Right ventricle myocardium inferior (tissue), 1 donor: ENCODE measurements at regions of chr15 and their contacts with region 1.

Region 1: GRCh38 chr15:73800662-73801345 is 47.7 kb upstream of the INSYN1 start:
- DNase-seq: peak; percentile 86
- ATAC-seq: peak; percentile 75

Region 2: DNA sequence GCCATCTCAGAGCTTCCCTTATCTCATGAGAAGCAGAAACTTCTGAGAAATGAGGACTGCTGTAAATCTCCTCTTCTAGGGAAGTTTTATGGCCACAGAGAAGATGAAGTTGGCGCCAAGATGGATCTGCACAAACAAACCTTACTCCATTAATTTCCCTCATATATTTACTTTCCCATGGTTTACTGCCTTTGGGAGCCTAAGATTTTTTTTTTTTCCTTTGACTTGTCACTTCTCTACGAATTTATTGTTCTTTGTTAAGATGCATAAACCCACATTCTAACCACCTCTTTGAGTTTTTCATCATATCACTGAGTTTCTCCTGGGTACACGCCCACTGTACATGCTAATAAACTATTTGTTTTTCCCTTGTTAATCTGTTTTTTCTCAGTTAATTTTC is 146.1 kb before region 1 on chr15:
- intact Hi-C with region 1: no loop called
- DNase-seq: no peak
- ATAC-seq: no peak

Region 3: DNA sequence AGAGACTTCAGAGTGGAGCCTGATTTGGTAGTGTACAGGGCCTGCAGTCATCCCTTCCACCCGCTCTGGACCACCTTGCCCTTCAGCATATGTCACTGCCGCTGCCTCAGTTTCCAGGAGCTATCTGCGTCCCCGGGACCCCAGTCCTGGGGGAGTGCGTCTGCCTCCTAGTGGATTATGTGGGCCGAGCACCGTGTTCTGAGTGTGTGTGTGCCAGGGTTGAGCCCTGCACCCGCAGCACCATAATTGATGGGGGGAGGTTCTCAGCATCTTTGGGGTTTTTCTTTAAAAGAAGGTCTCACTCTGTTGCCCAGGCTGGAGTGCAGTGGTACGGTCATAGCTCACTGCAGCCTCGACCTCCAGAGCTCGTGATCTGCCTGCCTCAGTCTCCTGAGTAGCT is 83.0 kb before region 1 on chr15:
- intact Hi-C with region 1: loop called (anchors 2 kb)
- DNase-seq: peak; percentile 43
- ATAC-seq: no peak

Region 4: GRCh38 chr15:73741321-73741836 is 59.4 kb before region 1 on chr15:
- intact Hi-C with region 1: loop called (anchors 5 kb)
- DNase-seq: no peak
- ATAC-seq: no peak

Region 5: DNA sequence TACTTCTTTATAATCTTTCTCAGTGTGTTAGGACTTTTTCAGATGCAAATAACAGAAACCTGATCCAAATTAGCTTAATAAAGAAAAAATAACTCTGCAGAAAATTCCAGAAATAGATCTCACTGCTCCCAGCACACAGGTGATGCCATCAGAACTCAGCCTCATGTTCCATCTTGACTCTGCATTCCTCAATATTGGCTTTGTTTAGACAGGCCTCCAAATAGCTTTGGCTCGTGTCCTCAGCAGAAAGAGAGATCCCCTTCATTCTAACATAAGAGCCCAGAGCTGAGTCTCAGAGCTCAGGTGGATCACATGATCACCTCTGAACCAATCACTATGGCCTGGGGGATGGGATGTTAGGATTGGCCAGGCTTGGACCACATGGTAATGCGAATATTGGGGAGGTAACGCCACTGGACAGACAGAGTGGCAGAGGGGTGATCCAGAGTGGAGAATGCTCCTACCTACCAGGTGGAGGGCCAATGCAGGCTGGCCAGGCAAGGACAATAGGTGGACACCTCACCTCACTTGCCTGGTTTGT is 26.0 kb after region 1 on chr15:
- intact Hi-C with region 1: no loop called
- DNase-seq: no peak
- ATAC-seq: no peak

Region 6: DNA sequence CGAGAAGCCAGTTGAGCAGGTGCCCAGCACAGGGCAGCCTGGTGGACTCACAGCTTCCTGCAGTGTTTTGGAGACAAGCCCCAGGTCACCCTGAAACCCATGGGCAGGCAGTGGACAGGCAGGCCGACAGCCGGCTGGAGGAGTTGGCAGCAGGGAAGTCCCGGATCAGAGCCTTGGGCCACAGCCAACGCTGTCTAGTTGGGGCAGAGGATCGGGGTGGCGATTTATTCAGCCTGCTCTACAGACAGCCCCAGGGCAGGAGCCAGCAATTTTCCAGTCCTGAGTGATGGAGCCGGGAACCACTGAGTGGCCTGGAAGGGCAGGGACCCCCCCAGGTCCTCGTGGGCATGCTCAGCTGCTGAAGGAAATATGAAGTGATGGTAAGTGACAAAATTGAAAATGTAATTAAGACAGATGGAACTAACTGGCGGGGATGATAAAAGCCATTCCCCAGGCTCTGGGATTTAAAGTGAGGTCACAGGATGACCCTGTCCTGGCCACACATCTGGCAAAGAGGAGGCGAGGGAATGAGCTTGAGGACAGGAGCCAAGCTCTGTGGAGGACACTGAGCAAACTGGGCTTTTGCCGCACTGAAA is 38.1 kb after region 1 on chr15:
- intact Hi-C with region 1: loop called (anchors 2 kb)
- DNase-seq: peak; percentile 85
- ATAC-seq: peak; percentile 95